Pancreas (tissue), 10 donors: ENCODE measurements at regions of chr14 and their contacts with region 1.

Region 1: GRCh38 chr14:99884834-99885648 is 91.8 kb downstream of the EML1 start:
- DNase-seq: no peak
- ATAC-seq: peak; percentile 71 to 96 (median 91)
- H3K4me3 ChIP-seq: no peak overlapping the region
- H3K27ac ChIP-seq: no peak overlapping the region
- H3K4me1 ChIP-seq: peaks cover 2 to 7% (median 4%) of the 10 kb centered on the region in 3 donors
- H3K27me3 ChIP-seq: no peaks in the 10 kb centered on the region
- CTCF ChIP-seq: peak; percentile 51 to 68 (median 61)

Region 2: GRCh38 chr14:99676673-99677072 is 208.4 kb before region 1 on chr14:
- intact Hi-C with region 1: loop called in 1 of 3 experiments (anchors 5 kb)
- DNase-seq: peak in 1 of 6 donors; percentile 52
- ATAC-seq: no peak
- H3K4me3 ChIP-seq: no peak overlapping the region
- H3K27ac ChIP-seq: no peak overlapping the region
- H3K4me1 ChIP-seq: no peaks in the 10 kb centered on the region
- H3K27me3 ChIP-seq: no peaks in the 10 kb centered on the region
- CTCF ChIP-seq: no peak

Region 3: GRCh38 chr14:99729991-99730868 is 154.8 kb before region 1 on chr14:
- intact Hi-C with region 1: loop called (anchors 5 kb)
- DNase-seq: peak; percentile 57 to 98 (median 82)
- ATAC-seq: peak; percentile 74 to 85 (median 82)
- H3K4me3 ChIP-seq: peak overlapping the region; percentile 35 to 68 (median 40)
- H3K27ac ChIP-seq: no peak overlapping the region
- H3K4me1 ChIP-seq: peaks cover 0 to 14% (median 0%) of the 10 kb centered on the region in 3 donors
- H3K27me3 ChIP-seq: no peaks in the 10 kb centered on the region
- CTCF ChIP-seq: peak; percentile 81 to 93 (median 86)

Region 4: GRCh38 chr14:99946652-99947489 is 61.8 kb after region 1 on chr14:
- intact Hi-C with region 1: no loop called
- DNase-seq: peak in 3 of 6 donors; percentile 37 to 82 (median 43)
- ATAC-seq: peak; percentile 65 to 84 (median 80)
- H3K4me3 ChIP-seq: no peak overlapping the region
- H3K27ac ChIP-seq: no peak overlapping the region
- H3K4me1 ChIP-seq: peaks cover 0 to 38% (median 0%) of the 10 kb centered on the region in 3 donors
- H3K27me3 ChIP-seq: no peaks in the 10 kb centered on the region
- CTCF ChIP-seq: peak; percentile 88 to 93 (median 92)